ENCODE measurements at regions of chr11 and their contacts with region 1.

Region 1: DNA sequence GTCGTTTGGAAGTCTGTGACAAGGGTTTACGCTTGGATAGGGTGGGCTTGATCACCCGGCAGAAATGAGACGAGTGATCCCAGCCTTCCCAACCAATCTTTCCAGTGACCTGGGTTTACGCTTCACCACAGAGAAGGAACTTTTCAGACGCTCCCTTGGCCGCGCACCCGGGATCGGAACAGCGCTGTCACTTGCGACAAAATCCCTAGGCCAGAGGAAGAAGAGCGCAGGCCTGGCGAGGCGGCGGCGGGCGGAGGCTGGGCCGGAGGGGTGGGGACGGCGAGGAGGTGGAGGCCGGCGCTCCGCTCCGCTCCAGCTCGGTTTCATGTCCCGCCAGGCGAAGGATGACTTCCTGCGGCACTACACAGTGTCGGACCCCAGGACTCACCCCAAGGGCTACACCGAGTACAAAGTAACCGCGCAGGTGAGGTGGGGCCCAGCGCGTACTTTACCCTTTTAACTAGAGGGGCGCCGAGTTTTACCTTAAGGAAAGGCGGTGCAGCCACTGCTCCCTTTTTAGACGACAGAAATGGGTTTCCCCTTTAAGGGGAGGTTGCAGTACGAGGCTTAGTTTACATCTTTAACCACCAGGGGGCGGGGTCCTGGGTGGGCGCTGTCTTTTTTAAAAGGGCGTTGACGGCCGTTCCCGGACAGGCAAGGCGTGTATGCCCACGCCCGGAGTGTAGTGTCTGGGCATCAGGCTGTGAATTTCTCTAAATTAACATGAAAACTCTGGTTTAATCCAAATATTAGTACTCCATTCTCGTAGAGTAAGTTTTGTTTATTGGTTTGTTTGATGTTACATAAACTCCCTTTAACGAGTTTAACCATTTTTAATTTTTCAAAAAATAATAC is at the start of gene SNX15:
- DNase-seq: peak; percentile 70
- H3K4me3 ChIP-seq: peak within 1 kb of the TSS; percentile 87
- CTCF ChIP-seq: peak; percentile 56

Region 2: GRCh38 chr11:65040847-65041621 is 13.6 kb after region 1 on chr11 and contains the start of gene SAC3D1:
- CTCF ChIA-PET with region 1: interaction called, 14 read pairs
- POLR2A ChIA-PET with region 1: interaction called, 3 read pairs
- DNase-seq: peak; percentile 37
- H3K4me3 ChIP-seq: peak within 1 kb of the TSS; percentile 73
- CTCF ChIP-seq: no peak

Region 3: GRCh38 chr11:65317074-65317786 is 289.8 kb after region 1 on chr11:
- CTCF ChIA-PET with region 1: no interaction called
- POLR2A ChIA-PET with region 1: no interaction called
- DNase-seq: no peak
- H3K4me3 ChIP-seq: peak overlapping the region; percentile 87
- CTCF ChIP-seq: no peak

Measured in AG04449 (cell line).